ENCODE measurements at regions of chr19 and their contacts with region 1.

Region 1: DNA sequence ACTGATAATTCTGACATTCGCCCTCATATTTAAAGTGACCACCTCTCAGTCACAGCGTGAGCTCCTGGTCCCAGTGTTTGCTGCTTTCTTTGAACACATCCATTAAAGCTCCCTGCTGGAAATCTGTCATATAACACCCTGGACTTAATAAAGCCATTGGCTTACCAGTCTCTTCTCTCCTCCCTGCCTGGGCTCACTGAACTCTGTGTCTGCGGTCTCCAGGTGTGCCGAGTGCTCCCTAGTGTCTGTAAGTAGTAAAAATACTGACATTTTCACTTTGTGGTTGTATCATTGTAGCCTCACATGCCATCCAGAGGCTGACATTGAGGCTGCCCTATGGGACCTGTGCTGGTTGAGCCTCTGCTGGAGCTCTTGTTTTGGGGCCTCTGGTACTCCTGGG is 2.6 kb upstream of the PSG11 start:
- DNase-seq: no peak
- H3K4me3 ChIP-seq: no peak overlapping the region
- CTCF ChIP-seq: no peak

Region 2: DNA sequence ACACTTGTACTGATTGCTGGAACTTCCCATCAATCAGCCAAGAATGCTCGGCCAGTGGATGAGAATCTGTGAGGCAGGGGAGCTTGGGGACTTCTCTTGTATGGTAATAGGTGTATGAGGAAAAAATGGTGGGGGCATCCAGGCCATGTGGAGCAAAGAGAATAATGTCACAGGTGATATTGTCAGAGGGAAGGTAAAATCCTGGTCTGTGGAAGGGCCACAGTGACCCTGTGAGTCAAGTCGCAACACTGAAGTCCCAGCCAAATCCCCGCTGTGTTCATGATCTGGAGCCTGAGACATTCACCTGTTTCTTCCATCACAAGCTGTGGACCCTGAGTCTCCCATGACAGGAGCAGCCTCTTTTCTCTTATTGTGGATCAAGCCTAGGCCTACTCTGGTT is 100.0 kb before region 1 on chr19:
- CTCF ChIA-PET with region 1: interaction called, 16 read pairs
- POLR2A ChIA-PET with region 1: no interaction called
- DNase-seq: no peak
- H3K4me3 ChIP-seq: no peak overlapping the region
- CTCF ChIP-seq: no peak

Region 3: DNA sequence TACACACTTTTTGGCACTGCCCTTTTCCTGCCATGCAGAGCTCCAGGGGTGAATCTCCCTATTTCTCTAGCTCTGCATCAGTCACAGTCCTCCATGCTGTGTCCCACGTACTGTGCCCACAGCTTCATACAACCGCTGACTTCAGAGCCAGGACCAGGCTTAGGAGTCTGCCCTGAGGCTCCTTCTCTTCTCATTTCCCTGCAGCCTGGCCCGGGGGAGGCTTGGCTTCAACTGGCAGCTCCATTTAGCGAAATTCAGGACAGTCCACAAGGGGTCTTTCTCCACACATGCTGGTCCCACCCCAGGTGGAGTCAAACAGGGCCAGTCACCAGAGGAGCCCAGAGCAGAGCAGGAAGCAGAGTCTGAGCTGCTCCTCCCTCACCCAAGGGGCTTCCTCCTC is 42.0 kb after region 1 on chr19:
- CTCF ChIA-PET with region 1: no interaction called
- POLR2A ChIA-PET with region 1: no interaction called
- DNase-seq: no peak
- H3K4me3 ChIP-seq: no peak overlapping the region
- CTCF ChIP-seq: no peak

Measured in AG04449 (cell line).